AG04449 (cell line): ENCODE measurements at regions of chr2 and their contacts with region 1.

Region 1: DNA sequence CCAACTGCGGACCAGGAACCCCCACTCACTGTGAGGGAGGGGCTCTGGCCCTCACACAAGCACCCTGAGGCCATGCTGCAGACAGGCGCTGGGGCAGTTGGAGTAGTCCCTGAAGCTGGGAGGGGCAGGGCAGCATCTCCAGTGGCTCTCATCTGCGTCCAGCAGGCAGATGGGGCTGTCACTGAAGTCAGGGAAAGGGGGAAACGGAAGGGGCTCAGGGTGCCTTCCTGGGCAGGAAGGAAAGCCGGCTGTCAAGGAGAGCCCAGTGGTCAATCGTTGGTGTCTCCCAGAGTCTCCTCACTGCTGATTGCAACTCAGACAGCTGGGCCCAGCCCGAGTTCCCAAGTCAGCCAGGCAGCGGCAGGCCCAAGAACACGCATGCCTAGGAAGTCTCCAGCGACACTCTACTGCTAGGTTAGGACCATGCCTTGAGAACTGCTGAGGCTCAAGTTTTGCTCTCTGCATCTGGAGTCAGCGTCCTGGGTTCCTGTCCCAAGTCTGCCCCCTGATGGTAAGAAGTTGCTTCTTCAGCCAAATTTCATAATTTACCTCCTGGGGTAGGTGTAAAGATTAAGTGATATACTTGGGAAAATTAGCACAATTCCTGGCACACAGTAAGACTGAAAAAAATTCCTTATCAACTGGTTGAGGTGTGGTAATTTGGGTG is 27.5 kb upstream of the NMUR1 start:
- DNase-seq: peak; percentile 23
- H3K4me3 ChIP-seq: no peak overlapping the region
- CTCF ChIP-seq: peak; percentile 66

Region 2: GRCh38 chr2:231138699-231139098 is 419.0 kb before region 1 on chr2:
- CTCF ChIA-PET with region 1: no interaction called
- POLR2A ChIA-PET with region 1: no interaction called
- DNase-seq: no peak
- H3K4me3 ChIP-seq: no peak overlapping the region
- CTCF ChIP-seq: no peak

Region 3: GRCh38 chr2:231364961-231365810 is 192.5 kb before region 1 on chr2:
- CTCF ChIA-PET with region 1: no interaction called
- POLR2A ChIA-PET with region 1: no interaction called
- DNase-seq: peak; percentile 45
- H3K4me3 ChIP-seq: no peak overlapping the region
- CTCF ChIP-seq: no peak

Region 4: DNA sequence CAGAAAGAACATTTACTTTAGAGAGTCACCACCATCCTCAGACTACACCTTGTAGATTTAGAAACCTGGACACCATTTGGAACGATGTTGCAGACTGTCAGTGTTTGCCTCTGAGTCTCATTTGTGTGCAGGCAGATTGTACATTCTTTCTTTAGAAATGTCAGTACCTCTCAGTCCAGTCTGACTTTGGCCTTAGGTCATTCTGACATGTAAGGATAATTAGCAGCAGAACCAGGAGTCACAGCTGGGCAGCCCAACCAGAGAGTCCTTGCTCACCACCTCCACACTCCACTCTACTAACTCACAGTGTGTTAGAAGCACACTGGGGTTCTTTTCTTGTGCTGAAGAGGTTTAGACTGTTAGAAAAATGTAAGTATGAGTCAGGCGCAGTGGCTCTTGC is 38.3 kb before region 1 on chr2:
- CTCF ChIA-PET with region 1: interaction called, 45 read pairs
- POLR2A ChIA-PET with region 1: no interaction called
- DNase-seq: no peak
- H3K4me3 ChIP-seq: no peak overlapping the region
- CTCF ChIP-seq: no peak

Region 5: DNA sequence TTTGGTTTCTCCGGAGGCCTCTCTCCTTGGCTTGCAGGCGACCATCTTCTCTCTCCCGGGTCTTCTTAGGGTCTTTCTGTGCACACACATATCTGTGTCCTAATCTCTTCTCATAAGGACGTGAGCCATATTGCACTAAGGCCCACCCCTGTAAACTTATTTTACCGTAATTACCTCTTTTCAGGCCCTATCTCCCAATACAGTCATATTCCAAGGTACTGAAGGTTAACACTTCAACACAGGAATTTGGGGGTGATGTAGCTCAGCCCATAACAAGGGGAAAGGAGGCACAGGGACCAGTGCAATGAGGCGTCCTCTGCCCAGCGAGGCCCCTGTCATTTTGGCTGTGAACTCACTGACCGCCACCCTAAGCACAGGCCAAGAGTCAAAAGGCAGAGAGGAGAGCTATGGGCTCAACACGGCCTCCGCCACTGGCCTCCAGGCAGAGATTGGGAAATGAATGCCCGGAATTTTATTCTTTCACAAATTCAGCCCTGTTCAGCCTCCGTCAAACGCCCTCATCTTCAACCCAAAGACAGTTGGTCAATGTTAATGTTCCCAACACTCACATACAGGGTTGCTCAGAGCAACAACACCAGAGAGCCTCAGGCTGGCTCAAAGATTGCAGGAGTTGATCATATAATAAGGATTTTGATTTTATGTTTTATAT is 11.6 kb before region 1 on chr2:
- CTCF ChIA-PET with region 1: interaction called, 47 read pairs
- POLR2A ChIA-PET with region 1: interaction called, 3 read pairs
- DNase-seq: no peak
- H3K4me3 ChIP-seq: no peak overlapping the region
- CTCF ChIP-seq: no peak

Region 6: DNA sequence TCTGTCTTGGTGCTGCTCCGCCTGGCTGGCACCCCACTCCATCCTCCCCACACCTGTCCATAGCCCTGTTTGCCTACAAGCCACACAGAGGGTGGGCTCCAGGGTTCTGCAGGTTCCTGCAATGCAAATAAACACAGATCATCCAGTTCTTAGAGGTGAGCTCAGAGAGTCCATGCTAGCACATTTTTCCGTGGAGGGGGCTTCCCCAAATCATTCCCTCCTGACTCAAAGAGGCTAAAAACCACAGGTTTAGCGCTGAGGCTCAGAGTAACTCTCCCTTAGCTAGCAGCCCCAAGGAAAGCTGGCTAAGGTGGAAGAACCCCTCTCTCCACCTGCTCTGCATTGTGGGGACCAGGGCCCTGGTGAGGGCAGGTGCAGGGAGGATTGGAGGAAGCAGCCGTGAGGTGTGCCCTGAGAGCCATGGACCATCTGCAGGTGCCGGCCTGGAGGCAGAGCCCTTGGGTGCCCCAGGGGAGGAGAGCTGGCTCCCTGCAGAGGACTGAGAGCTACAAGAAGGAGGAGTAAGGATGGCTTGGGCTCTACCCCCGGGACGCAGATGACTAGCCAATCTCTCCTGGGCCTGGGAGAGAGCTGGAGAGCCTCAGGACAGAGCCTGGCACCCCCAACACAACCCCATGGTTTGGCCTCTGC is 11.2 kb after region 1 on chr2:
- CTCF ChIA-PET with region 1: interaction called, 47 read pairs
- POLR2A ChIA-PET with region 1: no interaction called
- DNase-seq: no peak
- H3K4me3 ChIP-seq: no peak overlapping the region
- CTCF ChIP-seq: no peak

Region 7: GRCh38 chr2:231648587-231649174 is 91.0 kb after region 1 on chr2:
- CTCF ChIA-PET with region 1: no interaction called
- POLR2A ChIA-PET with region 1: no interaction called
- DNase-seq: no peak
- H3K4me3 ChIP-seq: no peak overlapping the region
- CTCF ChIP-seq: peak; percentile 87

Region 8: DNA sequence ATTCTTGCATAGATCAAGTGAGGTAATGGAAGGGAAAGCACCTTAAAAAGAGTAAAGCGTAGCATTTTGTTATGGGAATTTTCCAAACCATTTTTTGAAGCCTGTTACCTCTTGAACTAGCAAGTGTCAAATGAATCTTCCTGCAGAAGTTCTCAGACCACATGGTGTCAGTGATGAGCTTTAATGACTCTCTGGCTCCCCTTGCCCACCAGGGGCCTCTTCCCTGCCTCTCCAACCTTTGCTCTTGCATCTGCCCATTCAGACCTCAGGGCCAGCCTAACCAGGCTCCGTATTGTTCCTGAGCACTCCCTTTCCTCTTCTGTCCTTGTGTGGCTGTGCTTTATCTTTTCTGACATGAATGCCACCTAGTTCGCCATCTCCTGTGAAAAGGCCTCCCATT is 559.7 kb after region 1 on chr2:
- CTCF ChIA-PET with region 1: no interaction called
- POLR2A ChIA-PET with region 1: no interaction called
- DNase-seq: no peak
- H3K4me3 ChIP-seq: no peak overlapping the region
- CTCF ChIP-seq: no peak